MCF 10A (cell line): ENCODE measurements at regions of chr1 and their contacts with region 1.

Region 1: GRCh38 chr1:205977402-205978014 is 25.7 kb downstream of the RAB7B start:
- DNase-seq: peak; percentile 93
- H3K4me3 Mint-ChIP-seq: no peak overlapping the region
- H3K27ac Mint-ChIP-seq: no peak overlapping the region
- H3K4me1 Mint-ChIP-seq: peaks cover 30% of the 10 kb centered on the region
- H3K27me3 Mint-ChIP-seq: peaks cover 11% of the 10 kb centered on the region
- CTCF ChIP-seq: peak; percentile 100

Region 2: DNA sequence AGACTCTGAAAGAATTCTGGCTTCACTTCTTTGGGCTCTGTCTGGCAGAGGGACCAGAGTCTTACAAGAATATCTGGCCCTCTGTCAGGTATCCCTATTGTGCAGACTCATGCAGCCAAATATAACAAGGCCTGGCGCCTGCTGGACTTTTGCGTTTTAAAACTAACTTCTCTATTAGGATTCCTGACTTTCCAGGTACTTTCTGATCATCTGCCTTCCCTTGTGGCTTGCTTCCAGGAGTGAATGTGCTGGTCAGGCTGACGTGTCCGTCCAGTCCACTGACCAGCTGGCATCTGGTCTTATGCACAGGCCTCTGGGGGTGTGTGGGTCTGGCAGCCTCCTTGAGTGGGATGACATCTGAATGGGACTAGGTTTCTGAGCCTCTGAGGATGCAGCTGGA is 193.6 kb before region 1 on chr1:
- CTCF ChIA-PET with region 1: interaction called, 174 read pairs
- POLR2A ChIA-PET with region 1: no interaction called
- intact Hi-C with region 1: no loop called
- DNase-seq: no peak
- H3K4me3 Mint-ChIP-seq: no peak overlapping the region
- H3K27ac Mint-ChIP-seq: no peak overlapping the region
- H3K4me1 Mint-ChIP-seq: no peaks in the 10 kb centered on the region
- H3K27me3 Mint-ChIP-seq: no peaks in the 10 kb centered on the region
- CTCF ChIP-seq: no peak

Region 3: DNA sequence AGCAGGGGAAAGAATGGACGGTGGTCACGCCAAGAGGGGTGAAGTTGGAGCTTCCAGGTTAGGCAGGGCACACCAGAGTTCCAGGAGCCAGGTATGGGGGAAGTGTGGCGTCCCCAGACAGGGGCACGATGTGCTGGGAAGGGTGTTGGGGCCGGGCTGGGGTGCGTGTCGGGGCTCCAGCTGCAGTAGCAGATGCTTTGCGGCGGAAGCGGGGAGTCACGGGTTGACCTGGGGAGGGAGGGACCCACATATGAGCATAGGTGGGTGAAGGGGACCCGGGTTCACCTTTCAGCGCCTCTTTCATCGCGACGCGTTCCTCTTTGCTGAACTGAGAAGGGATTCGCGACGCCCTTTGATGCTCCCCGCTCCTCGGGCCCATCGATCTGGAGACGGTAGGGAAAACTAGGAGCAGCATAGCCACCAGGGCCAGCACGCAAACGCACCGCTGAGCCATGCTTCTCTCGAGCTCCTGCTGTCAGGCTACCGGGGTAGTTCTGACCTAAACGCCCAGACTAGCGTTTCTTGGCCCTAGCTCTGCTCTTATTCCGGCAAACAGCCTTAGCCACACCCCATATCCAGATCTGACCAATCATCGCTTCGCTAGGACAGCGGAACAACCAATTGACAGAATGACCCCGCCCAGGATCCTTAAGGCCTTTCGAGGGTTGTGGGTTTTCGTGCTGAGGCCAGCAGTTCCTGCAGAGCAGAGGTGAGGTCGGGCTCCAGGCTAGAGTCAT is 127.7 kb before region 1 on chr1 and contains the start of gene PM20D1:
- CTCF ChIA-PET with region 1: interaction called, 10 read pairs
- POLR2A ChIA-PET with region 1: no interaction called
- intact Hi-C with region 1: no loop called
- DNase-seq: no peak
- H3K4me3 Mint-ChIP-seq: no peak within 1 kb of the TSS
- H3K27ac Mint-ChIP-seq: no peak within 1 kb of the TSS
- H3K4me1 Mint-ChIP-seq: no peaks in the 10 kb centered on the region
- H3K27me3 Mint-ChIP-seq: peaks cover 10% of the 10 kb centered on the region
- CTCF ChIP-seq: no peak
- total RNA-seq, gene PM20D1: not detected in 2 replicates

Region 4: DNA sequence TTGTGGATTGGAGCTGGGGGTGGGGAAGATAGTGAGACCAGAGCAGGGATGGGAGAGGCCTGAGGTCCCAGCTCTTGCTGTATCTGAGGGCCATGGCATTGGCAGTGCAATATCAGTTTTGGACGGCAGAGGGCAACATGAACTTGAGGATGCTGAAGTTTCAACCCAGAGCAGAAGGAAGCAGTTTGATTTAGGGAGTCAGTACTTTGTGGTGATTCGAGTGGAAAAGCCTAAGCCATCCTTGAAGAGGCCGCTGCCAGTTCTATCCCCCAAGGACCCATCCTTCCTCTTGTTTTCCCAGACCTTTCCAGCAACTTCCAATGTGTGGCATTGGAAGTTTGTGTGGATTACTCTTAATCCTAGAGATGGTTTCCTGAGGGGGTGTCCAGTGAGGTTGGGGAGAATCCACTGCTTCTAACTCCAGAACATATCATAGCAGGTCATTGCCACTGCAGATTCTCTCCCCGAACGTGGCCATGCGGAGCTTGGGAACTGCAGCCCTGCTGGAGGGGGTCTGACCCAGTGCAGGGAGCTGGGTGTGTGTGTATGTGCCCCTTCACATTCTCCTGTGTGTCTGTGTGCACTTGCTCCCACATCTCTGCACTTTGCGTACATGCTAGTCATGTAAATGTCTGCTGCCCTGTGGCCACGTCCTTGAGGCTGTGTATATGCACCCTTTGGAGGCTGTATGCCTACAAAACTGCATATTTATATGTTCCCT is 58.3 kb before region 1 on chr1:
- CTCF ChIA-PET with region 1: interaction called, 911 read pairs
- POLR2A ChIA-PET with region 1: interaction called, 247 read pairs
- intact Hi-C with region 1: loop called (anchors 1 kb)
- DNase-seq: peak; percentile 95
- H3K4me3 Mint-ChIP-seq: no peak overlapping the region
- H3K27ac Mint-ChIP-seq: no peak overlapping the region
- H3K4me1 Mint-ChIP-seq: peaks cover 8% of the 10 kb centered on the region
- H3K27me3 Mint-ChIP-seq: peaks cover 27% of the 10 kb centered on the region
- CTCF ChIP-seq: peak; percentile 100

Region 5: GRCh38 chr1:205961405-205961804 is 16.1 kb before region 1 on chr1:
- CTCF ChIA-PET with region 1: interaction called, 68 read pairs
- POLR2A ChIA-PET with region 1: interaction called, 9 read pairs
- intact Hi-C with region 1: no loop called
- DNase-seq: peak; percentile 73
- H3K4me3 Mint-ChIP-seq: no peak overlapping the region
- H3K27ac Mint-ChIP-seq: peak overlapping the region; percentile 20
- H3K4me1 Mint-ChIP-seq: peaks cover 34% of the 10 kb centered on the region
- H3K27me3 Mint-ChIP-seq: peaks cover 47% of the 10 kb centered on the region
- CTCF ChIP-seq: no peak

Region 6: GRCh38 chr1:206030714-206031113 is 53.2 kb after region 1 on chr1:
- CTCF ChIA-PET with region 1: interaction called, 81 read pairs
- POLR2A ChIA-PET with region 1: interaction called, 13 read pairs
- intact Hi-C with region 1: no loop called
- DNase-seq: peak; percentile 95
- H3K4me3 Mint-ChIP-seq: no peak overlapping the region
- H3K27ac Mint-ChIP-seq: no peak overlapping the region
- H3K4me1 Mint-ChIP-seq: peaks cover 32% of the 10 kb centered on the region
- H3K27me3 Mint-ChIP-seq: peaks cover 11% of the 10 kb centered on the region
- CTCF ChIP-seq: peak; percentile 95